Activated CD4-positive, alpha-beta T cell treated with anti-CD3 and anti-CD28 coated beads, Interleukin-2, amount 10 ng/mL, durations not matched to agents 24 days and 14 days (primary cell): ENCODE measurements at regions of chr3 and their contacts with region 1.

Region 1: GRCh38 chr3:32992322-32992692 is 40.9 kb downstream of the CCR4 start:
- DNase-seq: no peak
- H3K4me3 Mint-ChIP-seq: peak overlapping the region; percentile 58
- H3K27ac Mint-ChIP-seq: peak overlapping the region; percentile 96
- H3K4me1 Mint-ChIP-seq: peaks cover 52% of the 10 kb centered on the region
- H3K27me3 Mint-ChIP-seq: no peaks in the 10 kb centered on the region

Region 2: DNA sequence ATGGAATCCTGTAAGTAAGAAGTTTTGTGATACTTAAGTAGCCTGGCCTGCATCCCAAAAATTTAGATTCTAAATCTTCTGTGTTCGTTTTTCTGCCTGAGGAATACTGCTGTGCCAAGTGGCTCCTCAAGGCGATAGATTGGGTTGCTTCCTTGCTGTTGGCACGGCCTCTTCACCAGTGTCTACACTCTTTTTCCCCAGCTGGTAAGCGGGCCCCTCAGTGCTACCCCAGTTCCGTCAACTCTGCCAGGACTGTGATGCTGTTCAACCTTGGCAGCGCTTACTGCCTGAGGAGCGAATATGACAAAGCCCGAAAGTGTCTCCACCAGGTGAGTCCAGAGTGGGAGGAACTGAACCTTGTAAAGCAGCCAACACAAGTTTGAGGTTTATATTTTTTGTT is 227.8 kb before region 1 on chr3:
- intact Hi-C with region 1: no loop called
- DNase-seq: no peak
- H3K4me3 Mint-ChIP-seq: no peak overlapping the region
- H3K27ac Mint-ChIP-seq: no peak overlapping the region
- H3K4me1 Mint-ChIP-seq: peaks cover under 1% of the 10 kb centered on the region
- H3K27me3 Mint-ChIP-seq: no peaks in the 10 kb centered on the region

Region 3: DNA sequence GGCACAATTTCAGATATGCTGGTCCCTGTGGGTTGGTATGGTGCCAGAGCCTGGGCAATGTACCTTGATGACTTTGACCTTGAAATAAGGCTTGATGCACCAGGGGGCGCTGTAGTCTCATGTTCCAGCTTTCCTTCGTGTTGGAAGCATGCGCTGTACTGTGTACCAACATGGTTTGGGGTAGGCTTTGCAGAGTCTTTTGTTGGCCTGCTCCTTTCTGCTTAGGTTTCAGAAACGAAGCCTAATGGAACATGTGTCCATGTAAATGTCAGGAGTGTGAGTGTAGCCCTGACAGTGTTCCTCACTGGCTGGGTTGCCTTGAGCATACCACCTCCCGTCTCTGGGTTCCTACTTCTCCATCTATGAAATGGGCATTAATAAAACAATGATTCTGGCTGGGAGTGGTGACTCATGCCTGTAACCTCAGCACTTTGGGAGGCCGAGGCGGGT is 44.5 kb before region 1 on chr3:
- intact Hi-C with region 1: loop called (anchors 1 kb)
- DNase-seq: peak; percentile 97
- H3K4me3 Mint-ChIP-seq: no peak overlapping the region
- H3K27ac Mint-ChIP-seq: peak overlapping the region; percentile 69
- H3K4me1 Mint-ChIP-seq: peaks cover 35% of the 10 kb centered on the region
- H3K27me3 Mint-ChIP-seq: no peaks in the 10 kb centered on the region

Region 4: GRCh38 chr3:32973982-32974381 is 18.3 kb before region 1 on chr3:
- intact Hi-C with region 1: loop called (anchors 1 kb)
- DNase-seq: peak; percentile 85
- H3K4me3 Mint-ChIP-seq: peak overlapping the region; percentile 33
- H3K27ac Mint-ChIP-seq: peak overlapping the region; percentile 46
- H3K4me1 Mint-ChIP-seq: peaks cover 37% of the 10 kb centered on the region
- H3K27me3 Mint-ChIP-seq: no peaks in the 10 kb centered on the region

Region 5: GRCh38 chr3:33023172-33024136 is 31.1 kb after region 1 on chr3:
- intact Hi-C with region 1: loop called (anchors 1 kb)
- DNase-seq: no peak
- H3K4me3 Mint-ChIP-seq: peak overlapping the region; percentile 59
- H3K27ac Mint-ChIP-seq: peak overlapping the region; percentile 95
- H3K4me1 Mint-ChIP-seq: peaks cover 48% of the 10 kb centered on the region
- H3K27me3 Mint-ChIP-seq: no peaks in the 10 kb centered on the region

Region 6: GRCh38 chr3:33063651-33064051 is 71.3 kb after region 1 on chr3:
- intact Hi-C with region 1: loop called (anchors 1 kb)
- DNase-seq: peak; percentile 85
- H3K4me3 Mint-ChIP-seq: peak overlapping the region; percentile 59
- H3K27ac Mint-ChIP-seq: peak overlapping the region; percentile 93
- H3K4me1 Mint-ChIP-seq: peaks cover 59% of the 10 kb centered on the region
- H3K27me3 Mint-ChIP-seq: no peaks in the 10 kb centered on the region